ENCODE measurements at regions of chr6 and their contacts with region 1.

Region 1: GRCh38 chr6:70667711-70668498 is at the start of gene SMAP1:
- DNase-seq: peak; percentile 97
- ATAC-seq: peak; percentile 99
- total RNA-seq, gene SMAP1: 27.3 TPM

Region 2: DNA sequence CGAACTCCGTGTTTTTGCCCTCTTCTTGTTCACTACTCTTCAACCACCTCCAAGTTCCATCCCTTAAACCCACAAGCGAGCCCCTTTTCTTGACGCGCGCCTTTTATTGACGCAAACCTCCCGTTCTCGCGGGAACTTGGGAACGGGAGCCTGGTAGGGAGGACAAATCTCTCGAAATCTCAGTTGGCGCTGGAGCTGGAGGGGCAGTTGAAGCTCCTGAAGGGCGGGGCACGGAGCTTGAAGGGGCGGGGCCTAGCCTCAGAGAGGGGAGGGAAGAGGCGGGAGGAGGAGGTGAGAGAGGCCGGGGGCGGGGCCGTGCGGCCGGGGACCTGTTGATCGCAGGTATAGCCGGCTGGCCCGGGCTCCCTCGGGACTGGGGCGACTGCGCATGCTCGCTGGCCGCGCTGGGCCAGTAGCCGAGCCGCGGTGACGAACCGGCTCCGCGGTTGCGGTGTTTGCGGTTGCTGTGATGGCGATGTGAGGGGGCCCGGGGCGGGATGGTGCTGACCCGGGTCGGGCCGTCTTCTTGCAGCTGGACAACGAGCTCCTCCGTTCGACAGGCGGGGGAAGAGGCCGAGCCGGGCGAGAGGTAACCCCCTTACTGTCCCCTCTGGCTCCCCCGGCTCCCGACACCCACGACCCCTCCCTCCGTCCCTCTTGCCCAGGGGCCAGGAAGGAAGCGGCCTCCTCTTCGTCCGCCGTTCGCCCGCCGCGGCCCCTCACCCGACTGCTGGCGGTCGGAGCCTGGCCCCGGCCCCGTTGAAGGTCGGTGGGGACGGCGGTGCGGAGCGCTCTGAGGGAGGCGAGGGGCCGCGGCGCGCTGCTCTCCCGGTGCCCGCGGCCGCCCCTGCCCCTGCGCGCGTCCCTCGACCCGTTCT is 254.6 kb before region 1 on chr6 and contains the start of gene FAM135A:
- intact Hi-C with region 1: loop called (anchors 10 kb)
- DNase-seq: peak; percentile 97
- ATAC-seq: peak; percentile 99
- total RNA-seq, gene FAM135A: 11.4 TPM

Region 3: DNA sequence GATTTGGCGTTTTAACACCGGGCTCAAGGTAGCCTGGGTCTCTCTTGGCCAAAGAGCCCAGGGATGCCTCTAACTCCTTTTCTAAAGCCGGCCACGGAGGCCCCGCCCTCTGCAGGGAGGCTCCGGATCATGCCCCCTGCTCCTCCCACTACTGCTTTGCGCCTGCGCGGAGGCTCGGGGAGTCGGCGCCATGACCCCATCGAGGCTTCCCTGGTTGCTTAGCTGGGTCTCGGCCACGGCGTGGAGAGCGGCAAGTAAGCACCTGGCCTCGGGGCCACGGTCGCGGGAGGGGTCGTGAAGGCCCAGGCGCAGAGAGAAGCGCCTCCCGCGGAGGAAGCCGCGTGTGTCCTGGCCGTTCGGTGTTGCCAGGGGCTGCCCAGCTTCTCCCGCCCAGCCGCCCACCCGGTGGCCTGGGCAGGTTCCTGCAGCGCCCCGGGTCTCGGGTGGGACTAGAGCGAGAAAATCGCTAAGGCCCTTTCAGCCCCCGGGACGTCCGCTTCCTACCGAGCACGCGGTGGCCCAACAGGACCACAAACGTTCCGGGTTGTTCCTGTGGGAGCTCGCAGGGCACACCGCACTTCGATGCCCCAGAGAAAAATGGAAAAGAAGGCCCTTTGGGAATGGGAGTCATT is 101.0 kb before region 1 on chr6 and contains the start of gene SDHAF4:
- intact Hi-C with region 1: loop called (anchors 5 kb)
- DNase-seq: peak; percentile 98
- ATAC-seq: peak; percentile 99
- total RNA-seq, gene SDHAF4: 16.6 TPM